A673 (cell line): ENCODE measurements at regions of chr1 and their contacts with region 1.

Region 1: GRCh38 chr1:168148916-168149315 is 12.2 kb upstream of the GPR161 start:
- DNase-seq: no peak
- H3K4me3 ChIP-seq: no peak overlapping the region
- H3K27ac ChIP-seq: no peak overlapping the region
- H3K4me1 ChIP-seq: peaks cover 3% of the 10 kb centered on the region
- H3K27me3 ChIP-seq: no peaks in the 10 kb centered on the region
- CTCF ChIP-seq: no peak

Region 2: DNA sequence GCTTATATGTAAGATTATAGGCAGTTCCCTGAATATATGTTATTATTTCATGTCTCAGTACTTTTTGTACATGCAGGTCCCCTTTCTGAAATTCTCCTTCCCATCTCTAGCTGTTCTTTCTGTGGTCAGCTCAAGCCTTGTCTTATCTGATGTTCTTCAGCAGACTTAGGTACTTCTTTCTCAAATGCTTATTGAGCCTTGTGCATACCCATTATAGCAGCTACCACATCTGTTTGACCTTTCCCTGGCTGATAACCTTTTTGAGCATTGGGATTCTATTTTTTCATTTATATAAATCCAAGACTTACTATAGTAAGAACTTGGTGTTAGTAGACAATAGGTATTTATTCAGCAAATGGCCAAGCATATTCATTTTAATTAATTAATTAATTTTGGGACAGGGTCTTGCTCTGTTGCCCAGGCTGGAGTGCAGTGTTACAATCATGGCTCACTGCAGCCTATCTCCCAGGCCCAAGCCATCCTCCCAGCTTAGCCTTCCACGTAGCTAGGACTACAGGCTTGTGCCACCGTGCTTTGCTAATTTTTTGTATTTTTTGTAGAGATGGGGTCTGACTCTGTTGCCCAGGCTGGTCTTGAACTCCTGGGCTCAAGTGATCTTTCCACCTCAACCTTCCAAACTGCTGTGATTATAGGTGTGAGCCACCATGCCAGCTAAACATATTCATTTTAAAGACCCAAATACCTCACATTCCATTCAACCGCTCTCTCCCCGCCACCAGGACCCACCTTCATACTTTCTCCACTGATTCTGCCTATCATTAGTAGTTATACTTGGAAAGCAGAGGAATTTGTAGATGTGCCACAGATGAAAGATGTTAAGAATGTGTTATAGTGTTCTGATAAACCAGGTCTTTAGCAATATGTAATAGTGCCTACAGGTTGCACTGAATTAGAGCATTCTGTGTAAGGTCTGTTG is 46.6 kb after region 1 on chr1:
- CTCF ChIA-PET with region 1: no interaction called
- POLR2A ChIA-PET with region 1: interaction called, 11 read pairs
- intact Hi-C with region 1: no loop called
- DNase-seq: no peak
- H3K4me3 ChIP-seq: no peak overlapping the region
- H3K27ac ChIP-seq: no peak overlapping the region
- H3K4me1 ChIP-seq: no peaks in the 10 kb centered on the region
- H3K27me3 ChIP-seq: no peaks in the 10 kb centered on the region
- CTCF ChIP-seq: no peak